MCF 10A (cell line): ENCODE measurements at regions of chr7 and their contacts with region 1.

Region 1: DNA sequence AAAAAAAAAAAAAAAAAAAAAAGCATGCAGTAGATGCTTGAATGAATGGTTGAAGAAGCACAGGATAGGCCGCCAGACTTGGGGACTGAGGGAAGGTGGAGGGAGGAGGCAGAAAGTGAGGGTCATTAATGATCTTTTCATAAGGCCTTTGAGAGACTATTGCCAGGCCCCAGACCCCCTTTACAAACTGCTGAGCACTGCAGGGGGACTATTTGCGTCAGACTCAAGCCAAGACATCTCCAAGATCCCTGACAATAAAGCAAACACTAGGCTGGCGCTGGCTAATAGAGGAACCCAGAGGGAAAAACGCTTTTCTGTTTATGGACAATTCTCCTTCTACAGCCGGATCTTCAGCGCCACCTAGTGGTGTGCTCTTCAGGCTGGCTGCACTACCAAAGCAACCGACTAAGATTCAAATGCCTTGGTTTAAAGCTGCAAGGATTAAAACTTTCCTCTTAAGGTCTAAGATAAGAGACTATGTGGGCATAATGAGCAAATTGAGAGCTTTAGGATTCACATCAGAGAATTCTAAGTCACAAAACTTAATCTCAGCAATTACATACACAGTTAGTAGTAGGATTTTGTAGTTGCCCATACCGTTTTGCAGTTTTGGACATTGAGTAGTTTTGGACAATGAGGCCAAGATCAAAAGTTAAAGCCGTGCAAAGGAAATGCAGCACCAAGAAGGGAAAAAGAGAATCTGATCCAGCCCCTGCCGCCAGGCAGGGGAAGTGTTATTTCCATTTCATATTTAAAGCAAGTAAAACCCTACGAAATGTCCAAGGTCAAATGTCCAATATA is 17.9 kb upstream of the AGK start:
- DNase-seq: peak; percentile 78
- H3K4me3 Mint-ChIP-seq: no peak overlapping the region
- H3K27ac Mint-ChIP-seq: no peak overlapping the region
- H3K4me1 Mint-ChIP-seq: no peaks in the 10 kb centered on the region
- H3K27me3 Mint-ChIP-seq: peaks cover 23% of the 10 kb centered on the region
- CTCF ChIP-seq: peak; percentile 89

Region 2: GRCh38 chr7:140517546-140518369 is 1015.6 kb before region 1 on chr7:
- CTCF ChIA-PET with region 1: no interaction called
- POLR2A ChIA-PET with region 1: no interaction called
- intact Hi-C with region 1: loop called (anchors 10 kb)
- DNase-seq: peak; percentile 91
- H3K4me3 Mint-ChIP-seq: no peak overlapping the region
- H3K27ac Mint-ChIP-seq: no peak overlapping the region
- H3K4me1 Mint-ChIP-seq: peaks cover 6% of the 10 kb centered on the region
- H3K27me3 Mint-ChIP-seq: no peaks in the 10 kb centered on the region
- CTCF ChIP-seq: peak; percentile 81

Region 3: GRCh38 chr7:140810830-140811556 is 722.4 kb before region 1 on chr7:
- CTCF ChIA-PET with region 1: interaction called, 24 read pairs
- POLR2A ChIA-PET with region 1: no interaction called
- intact Hi-C with region 1: no loop called
- DNase-seq: peak; percentile 77
- H3K4me3 Mint-ChIP-seq: no peak overlapping the region
- H3K27ac Mint-ChIP-seq: no peak overlapping the region
- H3K4me1 Mint-ChIP-seq: peaks cover 6% of the 10 kb centered on the region
- H3K27me3 Mint-ChIP-seq: no peaks in the 10 kb centered on the region
- CTCF ChIP-seq: peak; percentile 79

Region 4: DNA sequence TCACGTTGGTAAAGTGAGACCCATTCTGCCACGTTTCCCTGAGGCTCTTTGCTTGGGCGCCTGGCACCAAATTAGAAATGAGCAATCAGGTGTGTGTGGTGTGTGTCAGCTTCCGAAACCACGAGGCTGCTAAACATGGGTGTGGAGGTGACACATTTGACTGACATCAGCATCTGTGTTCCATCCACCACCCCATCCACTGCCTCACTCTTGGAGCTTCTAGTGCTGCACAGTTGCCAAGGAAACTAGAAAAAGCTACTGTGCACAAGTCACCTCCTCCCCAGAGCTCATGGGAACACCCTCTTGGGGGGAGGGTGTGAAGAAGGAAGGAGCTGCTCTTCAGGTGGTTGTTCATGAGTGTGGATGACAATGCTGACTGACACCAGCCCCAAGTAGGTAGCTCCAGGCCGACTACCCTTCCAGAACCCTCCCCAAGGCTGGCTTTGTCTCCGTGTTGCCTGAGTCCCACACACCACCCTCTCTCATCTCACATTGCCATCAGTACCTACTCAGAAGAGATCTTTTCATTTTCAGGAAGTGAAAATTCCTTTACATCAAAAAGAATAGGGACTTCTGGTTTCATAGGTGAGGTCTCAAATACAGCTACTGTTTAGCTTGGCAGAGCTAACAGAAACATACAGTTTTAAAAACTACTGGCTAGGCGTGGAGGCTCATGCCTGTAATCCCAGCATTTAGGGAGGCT is 307.3 kb before region 1 on chr7:
- CTCF ChIA-PET with region 1: interaction called, 3 read pairs
- POLR2A ChIA-PET with region 1: no interaction called
- intact Hi-C with region 1: loop called (anchors 5 kb)
- DNase-seq: no peak
- H3K4me3 Mint-ChIP-seq: no peak overlapping the region
- H3K27ac Mint-ChIP-seq: no peak overlapping the region
- H3K4me1 Mint-ChIP-seq: no peaks in the 10 kb centered on the region
- H3K27me3 Mint-ChIP-seq: no peaks in the 10 kb centered on the region
- CTCF ChIP-seq: no peak

Region 5: GRCh38 chr7:141460781-141461715 is 72.3 kb before region 1 on chr7:
- CTCF ChIA-PET with region 1: no interaction called
- POLR2A ChIA-PET with region 1: no interaction called
- intact Hi-C with region 1: no loop called
- DNase-seq: peak; percentile 41
- H3K4me3 Mint-ChIP-seq: no peak overlapping the region
- H3K27ac Mint-ChIP-seq: no peak overlapping the region
- H3K4me1 Mint-ChIP-seq: no peaks in the 10 kb centered on the region
- H3K27me3 Mint-ChIP-seq: no peaks in the 10 kb centered on the region
- CTCF ChIP-seq: no peak

Region 6: DNA sequence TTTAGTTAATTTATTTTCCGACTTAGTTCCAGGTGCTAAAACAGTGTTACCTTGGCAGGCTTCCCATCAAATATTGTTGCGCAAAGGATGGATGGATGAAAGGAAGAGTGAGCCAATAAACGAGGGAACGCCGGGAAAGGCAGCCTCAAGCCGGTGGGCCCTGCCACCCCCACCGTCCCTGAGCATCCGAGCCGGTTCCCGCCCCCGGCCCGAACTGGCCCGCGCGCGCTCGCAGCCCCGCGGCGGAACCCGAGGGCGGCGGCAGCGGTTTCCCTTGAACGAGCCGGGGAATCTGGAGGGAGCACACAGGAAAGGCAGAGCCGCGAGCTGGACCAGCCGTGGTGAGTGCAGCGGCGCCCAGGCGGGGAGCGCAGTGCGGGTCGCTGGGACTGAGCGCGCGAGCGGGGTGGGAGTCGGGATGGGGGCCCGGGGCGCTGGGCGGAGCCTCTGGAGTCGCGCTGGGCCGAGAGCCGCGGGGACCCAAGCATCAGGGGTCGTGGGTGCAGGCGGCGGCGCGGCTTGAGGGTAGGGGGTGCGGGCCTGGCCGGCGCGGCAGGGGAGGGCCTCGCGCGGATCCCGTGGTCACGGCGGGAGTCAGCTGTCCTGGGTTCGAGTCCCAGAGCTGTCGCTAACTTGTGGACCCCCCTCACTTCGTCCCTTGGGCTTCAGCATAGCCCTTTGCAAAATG is 17.9 kb after region 1 on chr7 and contains the start of gene AGK:
- CTCF ChIA-PET with region 1: interaction called, 32 read pairs
- POLR2A ChIA-PET with region 1: no interaction called
- intact Hi-C with region 1: no loop called
- DNase-seq: peak; percentile 64
- H3K4me3 Mint-ChIP-seq: peak within 1 kb of the TSS; percentile 85
- H3K27ac Mint-ChIP-seq: peak within 1 kb of the TSS; percentile 72
- H3K4me1 Mint-ChIP-seq: peaks cover 19% of the 10 kb centered on the region
- H3K27me3 Mint-ChIP-seq: no peaks in the 10 kb centered on the region
- CTCF ChIP-seq: no peak
- total RNA-seq, gene AGK: 35.4 and 41.4 TPM in 2 replicates

Region 7: DNA sequence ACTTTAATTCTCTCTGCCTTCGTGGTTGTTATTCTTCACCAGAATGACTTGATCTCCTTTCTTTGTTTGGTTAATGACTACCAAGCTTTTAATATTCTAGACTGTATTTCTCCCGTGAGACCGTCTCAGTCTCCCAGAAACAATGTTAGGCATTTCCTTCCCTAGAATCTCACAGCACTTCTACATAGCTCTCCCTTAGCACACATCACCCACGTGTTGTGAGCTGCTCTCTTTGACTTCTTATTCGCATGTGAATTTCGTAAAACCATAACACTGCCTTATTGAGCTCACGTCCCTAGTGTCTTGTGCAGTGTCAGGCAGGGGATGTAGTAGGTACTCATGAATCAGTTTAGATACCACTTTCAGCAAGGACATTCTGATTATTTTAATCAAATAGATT is 520.6 kb after region 1 on chr7:
- CTCF ChIA-PET with region 1: no interaction called
- POLR2A ChIA-PET with region 1: no interaction called
- intact Hi-C with region 1: no loop called
- DNase-seq: no peak
- H3K4me3 Mint-ChIP-seq: no peak overlapping the region
- H3K27ac Mint-ChIP-seq: no peak overlapping the region
- H3K4me1 Mint-ChIP-seq: no peaks in the 10 kb centered on the region
- H3K27me3 Mint-ChIP-seq: no peaks in the 10 kb centered on the region
- CTCF ChIP-seq: no peak